ENCODE measurements at regions of chr3 and their contacts with region 1.

Region 1: GRCh38 chr3:135895106-135895733 is 70.3 kb upstream of the PPP2R3A start:
- H3K4me3 ChIP-seq: no peak overlapping the region
- H3K27ac ChIP-seq: no peak overlapping the region
- H3K4me1 ChIP-seq: no peaks in the 10 kb centered on the region
- CTCF ChIP-seq: peak; percentile 49

Region 2: GRCh38 chr3:135736740-135737139 is 158.5 kb before region 1 on chr3:
- CTCF ChIA-PET with region 1: interaction called, 13 read pairs
- POLR2A ChIA-PET with region 1: no interaction called
- H3K4me3 ChIP-seq: no peak overlapping the region
- H3K27ac ChIP-seq: no peak overlapping the region
- H3K4me1 ChIP-seq: no peaks in the 10 kb centered on the region
- CTCF ChIP-seq: no peak